ENCODE measurements at regions of chr2 and their contacts with region 1.

Region 1: GRCh38 chr2:228039752-228040534 is 141.5 kb downstream of the SPHKAP start:
- DNase-seq: no peak
- ATAC-seq: peak; percentile 55

Region 2: GRCh38 chr2:227881866-227882517 is 158.0 kb before region 1 on chr2:
- intact Hi-C with region 1: no loop called
- DNase-seq: no peak
- ATAC-seq: no peak

Region 3: GRCh38 chr2:228458364-228458763 is 418.4 kb after region 1 on chr2:
- intact Hi-C with region 1: no loop called
- DNase-seq: no peak
- ATAC-seq: no peak

Region 4: GRCh38 chr2:228657807-228658402 is 618.0 kb after region 1 on chr2:
- intact Hi-C with region 1: loop called (anchors 5 kb)
- DNase-seq: no peak
- ATAC-seq: peak; percentile 78

Measured in Right ventricle myocardium superior (tissue), 1 donor.